Mammary epithelial cell (primary cell): ENCODE measurements at regions of chr1 and their contacts with region 1.

Region 1: GRCh38 chr1:201774224-201774982 is 54.6 kb upstream of the IPO9 start:
- DNase-seq: peak; percentile 86
- H3K4me3 ChIP-seq: no peak overlapping the region
- H3K27ac ChIP-seq: peak overlapping the region; percentile 94
- H3K4me1 ChIP-seq: peaks cover 63% of the 10 kb centered on the region
- H3K27me3 ChIP-seq: no peaks in the 10 kb centered on the region
- CTCF ChIP-seq: no peak

Region 2: GRCh38 chr1:201761871-201762270 is 12.5 kb before region 1 on chr1:
- CTCF ChIA-PET with region 1: no interaction called
- dilution Hi-C with region 1: no loop called
- in situ Hi-C with region 1: no loop called
- intact Hi-C with region 1: loop called (anchors 1 kb)
- DNase-seq: no peak
- H3K4me3 ChIP-seq: no peak overlapping the region
- H3K27ac ChIP-seq: no peak overlapping the region
- H3K4me1 ChIP-seq: peaks cover 33% of the 10 kb centered on the region
- H3K27me3 ChIP-seq: no peaks in the 10 kb centered on the region
- CTCF ChIP-seq: no peak

Region 3: DNA sequence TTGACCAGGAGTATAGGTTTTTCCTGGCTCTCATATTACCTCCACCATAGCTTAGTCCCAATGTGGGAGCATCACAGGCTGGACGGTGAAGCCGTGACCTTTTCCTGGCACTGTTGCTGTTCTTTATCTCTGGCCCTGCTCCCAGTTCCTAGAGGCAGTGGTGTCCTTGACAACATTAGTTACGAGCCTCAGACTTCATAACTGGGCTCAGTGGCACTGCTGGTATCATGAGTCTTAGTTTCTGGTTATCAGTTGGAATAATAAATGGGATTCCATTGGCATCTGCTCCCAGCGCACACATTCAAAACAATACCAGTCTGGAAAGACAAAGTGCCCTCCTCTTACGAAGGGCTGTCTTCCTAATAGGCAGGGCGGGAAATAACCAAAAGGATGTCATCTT is 216.0 kb after region 1 on chr1:
- CTCF ChIA-PET with region 1: no interaction called
- dilution Hi-C with region 1: no loop called
- in situ Hi-C with region 1: no loop called
- intact Hi-C with region 1: no loop called
- DNase-seq: no peak
- H3K4me3 ChIP-seq: no peak overlapping the region
- H3K27ac ChIP-seq: no peak overlapping the region
- H3K4me1 ChIP-seq: peaks cover 27% of the 10 kb centered on the region
- H3K27me3 ChIP-seq: no peaks in the 10 kb centered on the region
- CTCF ChIP-seq: no peak

Region 4: DNA sequence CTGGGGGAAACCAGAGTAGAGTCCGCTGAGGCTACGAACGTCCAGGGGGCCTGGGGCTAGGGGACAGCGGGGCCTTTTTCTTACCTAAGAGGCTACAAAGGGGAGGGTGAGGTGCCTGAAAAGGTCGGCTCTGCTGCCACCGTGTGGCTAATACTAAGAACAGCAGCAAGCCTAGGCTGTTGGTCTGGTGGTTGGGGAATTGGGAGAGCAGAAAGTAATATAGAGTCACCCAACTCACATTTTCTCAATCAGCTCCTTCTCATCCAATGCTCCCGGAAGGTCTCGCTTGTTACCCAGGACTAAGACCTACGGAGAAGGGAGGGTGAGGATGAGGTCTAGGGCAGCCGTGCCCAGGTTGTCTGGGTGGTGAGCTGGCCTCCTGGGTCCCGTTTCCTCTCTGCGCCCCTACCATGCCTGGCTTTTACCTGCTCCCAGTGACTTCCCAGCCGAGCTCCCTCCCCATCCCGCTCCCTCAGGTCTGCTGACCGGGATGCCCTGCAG is 360.9 kb after region 1 on chr1:
- CTCF ChIA-PET with region 1: no interaction called
- dilution Hi-C with region 1: no loop called
- in situ Hi-C with region 1: no loop called
- intact Hi-C with region 1: no loop called
- DNase-seq: peak; percentile 39
- H3K4me3 ChIP-seq: no peak overlapping the region
- H3K27ac ChIP-seq: no peak overlapping the region
- H3K4me1 ChIP-seq: peaks cover 16% of the 10 kb centered on the region
- H3K27me3 ChIP-seq: no peaks in the 10 kb centered on the region
- CTCF ChIP-seq: peak; percentile 83 to 89